B cell (primary cell): ENCODE measurements at regions of chr17 and their contacts with region 1.

Region 1: GRCh38 chr17:78745407-78746088 is 36.5 kb downstream of the CYTH1 start:
- DNase-seq: peak; percentile 70
- ATAC-seq: no peak
- H3K4me3 ChIP-seq: no peak overlapping the region
- H3K4me3 Mint-ChIP-seq: peak overlapping the region; percentile 27
- H3K27ac ChIP-seq: peak overlapping the region; percentile 30 to 91
- H3K27ac Mint-ChIP-seq: peak overlapping the region; percentile 75
- H3K4me1 ChIP-seq: peaks cover 85 to 87% of the 10 kb centered on the region in 2 donors
- H3K4me1 Mint-ChIP-seq: peaks cover 82% of the 10 kb centered on the region
- H3K27me3 ChIP-seq: no peaks in the 10 kb centered on the region
- H3K27me3 Mint-ChIP-seq: no peaks in the 10 kb centered on the region
- CTCF ChIP-seq: peak; percentile 84

Region 2: DNA sequence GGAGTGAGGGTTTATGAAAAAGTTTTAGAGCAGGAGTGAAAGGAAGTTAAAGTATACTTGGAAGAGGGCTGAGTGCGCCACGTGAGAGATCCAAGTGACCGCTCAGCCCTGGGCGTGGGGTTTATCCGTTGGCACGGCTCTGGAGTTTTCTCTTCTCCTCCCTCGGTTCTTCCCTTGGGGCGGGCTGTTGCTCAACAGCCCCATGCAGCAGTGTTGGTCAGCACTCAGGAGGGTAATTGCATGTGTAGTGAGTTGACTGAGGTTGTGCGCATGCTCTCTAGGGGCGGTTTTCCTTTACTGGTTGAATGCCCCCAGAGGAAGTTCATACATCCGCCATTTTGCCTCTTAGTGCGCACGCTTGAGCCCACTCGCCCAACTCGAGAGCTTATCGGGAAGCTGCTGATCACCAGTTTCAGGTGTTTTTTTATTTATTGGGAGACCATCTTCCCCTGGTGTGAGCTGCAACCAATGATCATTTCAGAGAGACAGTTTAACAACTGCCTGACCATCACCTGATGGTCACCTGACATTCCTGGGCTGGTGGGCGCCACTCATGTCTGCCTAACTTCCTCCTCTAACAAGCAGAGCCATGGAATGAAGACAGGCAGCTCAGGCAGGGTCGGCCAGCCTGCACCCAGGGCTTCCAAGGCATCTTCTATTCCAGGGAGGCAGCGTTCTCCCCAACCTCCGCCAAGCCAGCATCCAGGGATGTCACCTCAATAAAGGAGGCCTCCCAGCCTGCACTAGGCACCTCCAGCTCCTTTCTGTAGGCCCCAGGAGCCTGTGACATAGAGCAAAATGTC is 127.1 kb before region 1 on chr17:
- CTCF ChIA-PET with region 1: no interaction called
- POLR2A ChIA-PET with region 1: no interaction called
- intact Hi-C with region 1: no loop called
- DNase-seq: no peak
- ATAC-seq: no peak
- H3K4me3 ChIP-seq: no peak overlapping the region
- H3K4me3 Mint-ChIP-seq: no peak overlapping the region
- H3K27ac ChIP-seq: no peak overlapping the region
- H3K27ac Mint-ChIP-seq: no peak overlapping the region
- H3K4me1 ChIP-seq: no peaks in the 10 kb centered on the region
- H3K4me1 Mint-ChIP-seq: no peaks in the 10 kb centered on the region
- H3K27me3 ChIP-seq: no peaks in the 10 kb centered on the region
- H3K27me3 Mint-ChIP-seq: no peaks in the 10 kb centered on the region
- CTCF ChIP-seq: no peak

Region 3: GRCh38 chr17:78697554-78698343 is 47.8 kb before region 1 on chr17:
- CTCF ChIA-PET with region 1: interaction called, 4 read pairs
- POLR2A ChIA-PET with region 1: no interaction called
- intact Hi-C with region 1: loop called (anchors 2 kb)
- DNase-seq: peak; percentile 61
- ATAC-seq: peak; percentile 81
- H3K4me3 ChIP-seq: no peak overlapping the region
- H3K4me3 Mint-ChIP-seq: peak overlapping the region; percentile 29
- H3K27ac ChIP-seq: peak overlapping the region; percentile 35 to 58
- H3K27ac Mint-ChIP-seq: peak overlapping the region; percentile 78
- H3K4me1 ChIP-seq: peaks cover 33 to 39% of the 10 kb centered on the region in 2 donors
- H3K4me1 Mint-ChIP-seq: peaks cover 53% of the 10 kb centered on the region
- H3K27me3 ChIP-seq: no peaks in the 10 kb centered on the region
- H3K27me3 Mint-ChIP-seq: no peaks in the 10 kb centered on the region
- CTCF ChIP-seq: no peak

Region 4: DNA sequence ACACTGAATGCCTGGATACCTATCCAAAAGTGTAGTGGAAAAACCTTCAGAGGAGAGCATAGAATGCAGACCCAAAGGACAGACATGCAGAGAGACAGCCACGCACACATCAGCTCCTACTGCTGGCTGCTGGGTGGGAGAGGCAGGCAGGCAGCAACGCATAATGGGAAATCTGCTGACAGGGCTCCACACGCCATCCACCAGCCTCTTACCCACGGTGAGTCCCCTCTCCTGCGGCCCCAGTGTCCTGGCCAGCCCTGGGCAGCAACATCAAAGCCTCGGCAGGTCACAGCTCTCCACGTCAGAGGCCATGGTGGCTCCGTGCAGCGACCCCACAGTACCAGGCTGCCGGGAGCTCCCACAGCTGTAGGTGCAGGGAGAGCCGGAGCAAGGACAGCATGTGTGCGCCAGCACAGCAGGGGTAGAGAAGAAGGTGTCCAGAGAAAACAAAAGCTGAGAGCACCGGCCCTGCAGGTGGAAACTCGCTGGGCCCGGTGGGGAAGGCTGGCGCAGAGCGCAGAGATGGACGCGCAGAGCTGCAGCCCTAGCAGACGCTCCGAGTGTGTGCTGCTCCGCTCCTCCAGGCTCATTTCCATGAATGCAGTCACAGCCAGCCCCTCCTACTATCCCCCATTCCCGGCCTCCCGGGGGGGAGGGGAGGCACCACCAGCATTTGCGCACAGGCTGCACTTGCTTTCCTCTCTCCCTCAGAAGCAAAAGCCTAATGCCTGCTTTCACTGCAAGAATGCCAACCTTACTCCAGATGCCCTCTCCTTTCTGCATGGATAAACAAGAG is 22.3 kb before region 1 on chr17:
- CTCF ChIA-PET with region 1: interaction called, 35 read pairs
- POLR2A ChIA-PET with region 1: interaction called, 15 read pairs
- intact Hi-C with region 1: no loop called
- DNase-seq: no peak
- ATAC-seq: no peak
- H3K4me3 ChIP-seq: peak overlapping the region in 2 of 5 experiments; percentile 14
- H3K4me3 Mint-ChIP-seq: peak overlapping the region; percentile 67
- H3K27ac ChIP-seq: peak overlapping the region; percentile 73
- H3K27ac Mint-ChIP-seq: peak overlapping the region; percentile 82
- H3K4me1 ChIP-seq: peaks cover 95 to 100% of the 10 kb centered on the region in 2 donors
- H3K4me1 Mint-ChIP-seq: peaks cover 92% of the 10 kb centered on the region
- H3K27me3 ChIP-seq: no peaks in the 10 kb centered on the region
- H3K27me3 Mint-ChIP-seq: no peaks in the 10 kb centered on the region
- CTCF ChIP-seq: no peak

Region 5: DNA sequence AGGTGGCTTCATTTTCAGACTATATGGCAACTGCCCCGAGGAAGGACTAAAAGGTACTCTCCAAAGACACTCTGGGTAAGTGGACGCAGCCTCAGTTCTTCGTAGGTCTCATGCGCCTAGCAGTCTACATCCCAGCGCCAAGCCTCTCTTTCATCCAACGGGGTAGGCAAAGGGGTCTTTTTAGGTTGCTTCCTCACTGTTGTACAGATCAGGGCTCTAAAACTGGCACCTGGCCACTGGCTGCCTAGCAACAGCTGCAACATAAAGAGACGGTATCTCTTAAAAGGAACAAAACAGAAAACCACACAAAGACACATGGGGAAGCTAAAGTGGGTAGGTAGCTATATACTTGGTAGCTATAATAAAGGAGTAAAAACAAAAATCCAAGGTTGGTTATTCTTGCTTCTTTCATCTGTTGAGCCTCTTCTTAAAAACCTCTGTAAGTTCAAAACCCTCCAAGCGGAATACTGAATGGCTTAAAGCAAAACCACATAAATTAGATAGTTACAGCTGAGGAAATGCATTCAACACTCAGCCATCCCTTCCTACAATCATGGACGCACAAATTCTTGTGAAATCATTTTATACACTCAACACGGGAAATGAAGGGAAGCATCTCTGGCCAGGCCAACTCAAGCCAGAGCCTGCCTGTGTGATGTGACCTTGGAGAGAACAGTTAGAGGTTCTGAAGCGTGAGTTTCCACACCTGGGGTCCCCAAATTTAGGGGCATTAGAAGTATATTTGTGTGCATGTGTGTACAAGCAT is 13.8 kb after region 1 on chr17:
- CTCF ChIA-PET with region 1: interaction called, 9 read pairs
- POLR2A ChIA-PET with region 1: interaction called, 6 read pairs
- intact Hi-C with region 1: loop called (anchors 1 kb)
- DNase-seq: peak; percentile 90
- ATAC-seq: peak; percentile 74
- H3K4me3 ChIP-seq: peak overlapping the region; percentile 13 to 47 (median 45)
- H3K4me3 Mint-ChIP-seq: peak overlapping the region; percentile 80
- H3K27ac ChIP-seq: peak overlapping the region; percentile 96 to 98
- H3K27ac Mint-ChIP-seq: peak overlapping the region; percentile 95
- H3K4me1 ChIP-seq: peaks cover 62 to 81% of the 10 kb centered on the region in 2 donors
- H3K4me1 Mint-ChIP-seq: peaks cover 73% of the 10 kb centered on the region
- H3K27me3 ChIP-seq: no peaks in the 10 kb centered on the region
- H3K27me3 Mint-ChIP-seq: no peaks in the 10 kb centered on the region
- CTCF ChIP-seq: no peak

Region 6: DNA sequence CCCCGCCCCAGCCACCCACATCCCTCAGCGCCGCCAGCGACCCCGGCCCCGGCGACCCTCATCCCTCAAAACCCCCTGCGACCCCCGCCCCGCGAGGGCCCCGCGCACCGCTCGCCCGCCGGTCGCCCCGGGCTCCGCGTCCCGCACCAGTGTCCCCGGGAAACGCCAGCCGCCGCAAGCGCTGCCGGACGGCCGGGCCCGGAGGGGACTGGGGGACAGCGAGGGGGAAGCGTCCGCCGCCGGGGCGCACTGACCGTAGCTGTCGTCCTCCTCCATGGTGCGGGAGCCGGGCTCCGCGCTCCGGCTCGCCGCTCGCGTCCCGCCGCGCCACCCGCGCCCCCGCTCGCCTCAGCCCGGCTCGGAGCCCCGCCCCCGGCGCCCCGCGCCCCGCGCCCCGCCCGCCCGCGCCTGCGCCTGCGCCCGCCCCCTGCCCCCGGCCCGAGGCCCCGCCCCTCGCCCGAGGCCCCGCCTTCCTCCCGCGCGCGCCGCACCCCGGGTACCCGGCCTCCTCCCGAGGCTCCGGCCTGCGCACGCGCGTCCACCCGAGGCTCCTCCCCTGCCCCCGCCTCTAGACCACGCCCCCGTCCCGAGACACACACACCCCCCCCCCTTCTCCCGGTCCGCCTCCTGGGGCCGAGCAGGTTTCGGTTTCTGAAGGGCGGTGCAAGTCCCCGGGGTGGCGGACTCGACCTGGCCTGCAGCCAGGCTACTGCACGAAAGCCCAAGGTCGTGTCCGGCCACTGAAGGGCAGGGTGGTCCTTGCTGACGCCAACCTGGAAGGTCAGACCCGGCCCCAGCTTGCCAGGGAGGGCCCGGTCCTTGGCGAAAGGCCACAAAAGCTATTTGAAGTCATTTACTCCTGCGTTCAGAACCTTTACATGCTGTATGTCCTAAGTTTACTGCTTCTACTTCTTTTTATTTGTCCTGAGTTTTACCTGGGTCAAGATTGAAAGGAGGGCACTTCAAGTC is 36.7 kb after region 1 on chr17 and contains the start of gene CYTH1:
- CTCF ChIA-PET with region 1: interaction called, 5 read pairs
- POLR2A ChIA-PET with region 1: interaction called, 8 read pairs
- intact Hi-C with region 1: loop called (anchors 1 kb)
- DNase-seq: peak; percentile 96
- ATAC-seq: peak; percentile 83
- H3K4me3 ChIP-seq: peak within 1 kb of the TSS; percentile 78 to 95 (median 89)
- H3K4me3 Mint-ChIP-seq: peak within 1 kb of the TSS; percentile 88
- H3K27ac ChIP-seq: peak within 1 kb of the TSS; percentile 86 to 88
- H3K27ac Mint-ChIP-seq: peak within 1 kb of the TSS; percentile 96
- H3K4me1 ChIP-seq: peaks cover 33 to 44% of the 10 kb centered on the region in 2 donors
- H3K4me1 Mint-ChIP-seq: peaks cover 36% of the 10 kb centered on the region
- H3K27me3 ChIP-seq: no peaks in the 10 kb centered on the region
- H3K27me3 Mint-ChIP-seq: no peaks in the 10 kb centered on the region
- CTCF ChIP-seq: no peak
- total RNA-seq, gene CYTH1: 353 and 368 TPM in 2 replicates